ENCODE measurements at regions of chr1 and their contacts with region 1.

Region 1: GRCh38 chr1:42801832-42802473 is 15.0 kb upstream of the ERMAP start:
- DNase-seq: no peak
- ATAC-seq: no peak
- H3K4me3 ChIP-seq: no peak overlapping the region
- H3K4me3 Mint-ChIP-seq: no peak overlapping the region
- H3K27ac ChIP-seq: no peak overlapping the region
- H3K27ac Mint-ChIP-seq: no peak overlapping the region
- H3K4me1 ChIP-seq: peaks cover 0 to 5% of the 10 kb centered on the region in 2 experiments
- H3K4me1 Mint-ChIP-seq: peaks cover 3 to 4% (median 3%) of the 10 kb centered on the region in 3 donors
- H3K27me3 ChIP-seq: peaks cover 0 to 3% of the 10 kb centered on the region in 2 experiments
- H3K27me3 Mint-ChIP-seq: no peaks in the 10 kb centered on the region

Region 2: DNA sequence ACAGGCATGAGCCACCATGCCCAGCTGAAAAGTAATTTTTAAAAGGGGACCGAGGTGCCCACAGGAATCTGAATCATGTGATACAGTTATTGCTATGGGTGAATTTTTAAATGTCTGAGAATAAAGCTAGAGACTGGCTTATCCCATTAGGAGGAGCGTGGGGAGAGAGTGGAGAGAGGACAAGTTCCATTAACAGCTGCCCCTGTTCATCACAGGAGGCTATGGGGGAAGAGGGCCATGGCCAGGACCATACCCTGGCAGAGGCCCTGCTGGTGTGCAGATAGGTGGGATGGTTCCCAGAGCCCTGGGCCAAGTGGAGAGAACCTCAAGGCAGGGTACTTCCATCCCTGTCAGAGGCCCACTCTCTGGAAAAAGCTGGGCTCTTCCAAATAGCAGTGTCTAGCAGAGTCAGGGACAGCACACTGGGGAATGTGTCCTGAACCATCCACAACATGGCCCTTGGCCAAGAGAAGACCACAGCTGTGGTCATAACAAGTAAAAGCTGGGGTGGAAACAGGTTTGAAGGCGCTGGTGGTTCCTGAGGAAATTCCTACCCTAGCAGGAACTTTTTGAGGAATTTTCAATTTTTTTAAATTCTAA is 30.8 kb after region 1 on chr1:
- CTCF ChIA-PET with region 1: no interaction called
- POLR2A ChIA-PET with region 1: interaction called in 1 of 2 experiments, 11 read pairs
- DNase-seq: no peak
- ATAC-seq: no peak
- H3K4me3 ChIP-seq: no peak overlapping the region
- H3K4me3 Mint-ChIP-seq: no peak overlapping the region
- H3K27ac ChIP-seq: no peak overlapping the region
- H3K27ac Mint-ChIP-seq: no peak overlapping the region
- H3K4me1 ChIP-seq: no peaks in the 10 kb centered on the region
- H3K4me1 Mint-ChIP-seq: no peaks in the 10 kb centered on the region
- H3K27me3 ChIP-seq: no peaks in the 10 kb centered on the region
- H3K27me3 Mint-ChIP-seq: no peaks in the 10 kb centered on the region

Region 3: GRCh38 chr1:44170281-44170823 is 1368.4 kb after region 1 on chr1:
- CTCF ChIA-PET with region 1: no interaction called
- POLR2A ChIA-PET with region 1: no interaction called
- DNase-seq: no peak
- ATAC-seq: no peak
- H3K4me3 ChIP-seq: no peak overlapping the region
- H3K4me3 Mint-ChIP-seq: no peak overlapping the region
- H3K27ac ChIP-seq: no peak overlapping the region
- H3K27ac Mint-ChIP-seq: no peak overlapping the region
- H3K4me1 ChIP-seq: peaks cover 0 to 4% of the 10 kb centered on the region in 2 experiments
- H3K4me1 Mint-ChIP-seq: peaks cover 0 to 4% (median 0%) of the 10 kb centered on the region in 3 donors
- H3K27me3 ChIP-seq: peaks cover 0 to 32% of the 10 kb centered on the region in 2 experiments
- H3K27me3 Mint-ChIP-seq: peaks cover 9 to 33% of the 10 kb centered on the region in 2 donors